Sigmoid colon (tissue), 7 donors: ENCODE measurements at regions of chr6 and their contacts with region 1.

Region 1: DNA sequence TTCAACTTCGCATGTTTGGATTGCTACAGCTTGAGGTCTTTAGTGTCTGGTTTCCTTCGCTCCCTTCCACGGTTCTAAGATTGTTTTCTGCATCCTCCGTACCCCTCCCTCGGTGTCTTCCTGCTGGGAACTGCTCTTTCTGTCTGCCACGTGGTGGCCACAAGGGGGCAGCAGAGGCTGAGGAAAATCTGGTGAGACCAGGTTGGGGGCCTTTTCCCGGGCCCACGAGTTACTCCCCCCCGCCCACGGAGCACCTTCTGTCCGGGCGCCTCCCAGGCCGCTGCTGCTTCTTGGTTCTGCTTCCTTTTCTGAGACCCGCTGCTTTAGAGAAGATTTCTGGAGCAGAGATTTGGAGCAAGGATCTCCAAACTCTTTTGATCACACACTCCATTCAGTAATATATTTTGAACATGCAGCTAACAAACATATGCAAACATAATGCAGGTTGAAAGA is 21.1 kb upstream of the NOTCH4 start:
- DNase-seq: peak; percentile 91
- H3K4me3 ChIP-seq: peak overlapping the region in 2 of 4 donors; percentile 16 to 18
- H3K27ac ChIP-seq: peak overlapping the region; percentile 37 to 67 (median 63)
- H3K4me1 ChIP-seq: peaks cover 0 to 13% (median 10%) of the 10 kb centered on the region in 4 donors
- H3K27me3 ChIP-seq: no peaks in the 10 kb centered on the region
- CTCF ChIP-seq: peak; percentile 84 to 93 (median 93)
- EP300 ChIP-seq: no peak
- POLR2A ChIP-seq: no peak

Region 2: GRCh38 chr6:32118782-32119628 is 126.0 kb before region 1 on chr6:
- intact Hi-C with region 1: loop called (anchors 5 kb)
- DNase-seq: peak; percentile 96
- H3K4me3 ChIP-seq: no peak overlapping the region
- H3K27ac ChIP-seq: peak overlapping the region; percentile 52 to 69 (median 63)
- H3K4me1 ChIP-seq: peaks cover 0 to 18% (median 16%) of the 10 kb centered on the region in 4 donors
- H3K27me3 ChIP-seq: no peaks in the 10 kb centered on the region
- CTCF ChIP-seq: peak; percentile 77 to 93 (median 90)
- EP300 ChIP-seq: no peak
- POLR2A ChIP-seq: no peak

Region 3: DNA sequence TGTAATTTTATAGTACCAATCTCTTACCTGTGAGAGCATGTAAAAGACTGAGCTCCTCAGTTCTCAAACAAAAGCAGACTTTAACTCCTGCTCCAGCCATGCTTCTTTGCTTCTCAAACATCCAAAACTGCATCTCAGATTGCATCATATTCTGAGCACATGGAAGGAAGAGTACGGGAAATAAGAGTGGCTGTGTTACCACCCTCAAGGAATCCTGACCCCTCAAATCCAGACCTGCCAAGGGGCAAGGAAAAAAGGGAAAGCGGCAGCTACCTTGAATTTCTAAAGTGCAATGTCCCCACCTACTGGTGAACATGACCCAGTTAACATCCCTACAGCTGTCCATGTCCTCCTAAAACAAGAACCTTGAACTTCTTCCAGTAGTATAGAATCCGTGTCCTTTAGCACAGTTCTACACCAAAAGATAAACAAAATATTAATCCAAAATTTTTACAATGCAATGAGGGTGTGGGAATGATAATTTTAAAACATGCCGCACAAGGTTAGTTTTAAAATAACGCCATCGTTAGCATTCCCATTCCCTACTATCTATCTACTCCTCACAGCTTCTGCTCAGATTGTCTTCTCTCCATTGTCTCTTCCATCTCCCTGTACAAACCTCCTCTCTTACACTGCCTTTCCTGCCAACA is 455.5 kb after region 1 on chr6:
- intact Hi-C with region 1: loop called (anchors 10 kb)
- DNase-seq: no peak
- H3K4me3 ChIP-seq: no peak overlapping the region
- H3K27ac ChIP-seq: no peak overlapping the region
- H3K4me1 ChIP-seq: no peaks in the 10 kb centered on the region
- H3K27me3 ChIP-seq: peaks cover 0 to 41% (median 0%) of the 10 kb centered on the region in 3 donors
- CTCF ChIP-seq: peak in 3 of 4 experiments; percentile 53 to 64 (median 58)
- EP300 ChIP-seq: no peak
- POLR2A ChIP-seq: no peak

Region 4: GRCh38 chr6:32807020-32807580 is 562.1 kb after region 1 on chr6:
- intact Hi-C with region 1: loop called (anchors 10 kb)
- DNase-seq: no peak
- H3K4me3 ChIP-seq: no peak overlapping the region
- H3K27ac ChIP-seq: no peak overlapping the region
- H3K4me1 ChIP-seq: no peaks in the 10 kb centered on the region
- H3K27me3 ChIP-seq: peaks cover 0 to 18% (median 0%) of the 10 kb centered on the region in 3 donors
- CTCF ChIP-seq: no peak
- EP300 ChIP-seq: no peak
- POLR2A ChIP-seq: no peak